Body of pancreas (tissue), 4 donors: ENCODE measurements at regions of chr6 and their contacts with region 1.

Region 1: GRCh38 chr6:36023996-36024795 is at the start of gene SLC26A8:
- DNase-seq: no peak
- ATAC-seq: no peak
- H3K4me3 ChIP-seq: no peak within 1 kb of the TSS
- H3K27ac ChIP-seq: no peak within 1 kb of the TSS
- H3K4me1 ChIP-seq: no peaks in the 10 kb centered on the region
- H3K27me3 ChIP-seq: no peaks in the 10 kb centered on the region
- CTCF ChIP-seq: no peak
- POLR2A ChIP-seq: no peak
- total RNA-seq, gene SLC26A8: not detected

Region 2: GRCh38 chr6:36094753-36095496 is 70.7 kb after region 1 on chr6:
- intact Hi-C with region 1: loop called (anchors 5 kb)
- DNase-seq: peak; percentile 80 to 89 (median 84)
- ATAC-seq: peak; percentile 92
- H3K4me3 ChIP-seq: no peak overlapping the region
- H3K27ac ChIP-seq: peak overlapping the region in 1 of 4 donors; percentile 23
- H3K4me1 ChIP-seq: peaks cover 15% of the 10 kb centered on the region
- H3K27me3 ChIP-seq: no peaks in the 10 kb centered on the region
- CTCF ChIP-seq: peak; percentile 80 to 94 (median 90)
- POLR2A ChIP-seq: no peak